MCF 10A (cell line): ENCODE measurements at regions of chr5 and their contacts with region 1.

Region 1: DNA sequence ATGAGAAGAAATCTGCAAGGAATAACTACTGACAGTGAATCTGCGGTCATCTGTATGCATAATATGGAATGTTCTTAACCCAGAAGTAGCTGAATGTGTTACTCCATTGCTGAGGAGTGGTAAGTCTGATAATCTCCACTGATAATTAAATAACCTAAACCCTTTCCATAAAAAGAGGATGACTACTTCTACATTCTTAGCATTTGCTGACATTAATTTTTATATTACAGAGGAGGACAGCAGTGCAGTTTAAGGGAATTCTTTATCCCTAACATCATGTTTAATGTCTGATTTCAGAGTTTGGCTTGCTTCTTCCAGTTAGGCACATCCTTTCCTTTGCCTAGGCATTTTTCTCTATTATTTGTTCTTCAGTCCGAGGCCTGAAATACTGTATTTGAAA is 52.2 kb downstream of the CDC42SE2 start:
- DNase-seq: no peak
- H3K4me3 Mint-ChIP-seq: no peak overlapping the region
- H3K27ac Mint-ChIP-seq: peak overlapping the region; percentile 98
- H3K4me1 Mint-ChIP-seq: peaks cover 39% of the 10 kb centered on the region
- H3K27me3 Mint-ChIP-seq: no peaks in the 10 kb centered on the region
- CTCF ChIP-seq: no peak

Region 2: GRCh38 chr5:131165119-131165727 is 150.8 kb before region 1 on chr5 and contains the start of gene HINT1:
- CTCF ChIA-PET with region 1: interaction called, 3 read pairs
- POLR2A ChIA-PET with region 1: interaction called, 11 read pairs
- intact Hi-C with region 1: no loop called
- DNase-seq: peak; percentile 98
- H3K4me3 Mint-ChIP-seq: peak within 1 kb of the TSS; percentile 76
- H3K27ac Mint-ChIP-seq: peak within 1 kb of the TSS; percentile 65
- H3K4me1 Mint-ChIP-seq: peaks cover 10% of the 10 kb centered on the region
- H3K27me3 Mint-ChIP-seq: no peaks in the 10 kb centered on the region
- CTCF ChIP-seq: peak; percentile 14
- total RNA-seq, gene HINT1: 444 and 575 TPM in 2 replicates

Region 3: GRCh38 chr5:131281133-131281867 is 34.7 kb before region 1 on chr5:
- CTCF ChIA-PET with region 1: interaction called, 5 read pairs
- POLR2A ChIA-PET with region 1: interaction called, 22 read pairs
- intact Hi-C with region 1: no loop called
- DNase-seq: peak; percentile 34
- H3K4me3 Mint-ChIP-seq: peak overlapping the region; percentile 51
- H3K27ac Mint-ChIP-seq: peak overlapping the region; percentile 84
- H3K4me1 Mint-ChIP-seq: peaks cover 33% of the 10 kb centered on the region
- H3K27me3 Mint-ChIP-seq: no peaks in the 10 kb centered on the region
- CTCF ChIP-seq: no peak

Region 4: DNA sequence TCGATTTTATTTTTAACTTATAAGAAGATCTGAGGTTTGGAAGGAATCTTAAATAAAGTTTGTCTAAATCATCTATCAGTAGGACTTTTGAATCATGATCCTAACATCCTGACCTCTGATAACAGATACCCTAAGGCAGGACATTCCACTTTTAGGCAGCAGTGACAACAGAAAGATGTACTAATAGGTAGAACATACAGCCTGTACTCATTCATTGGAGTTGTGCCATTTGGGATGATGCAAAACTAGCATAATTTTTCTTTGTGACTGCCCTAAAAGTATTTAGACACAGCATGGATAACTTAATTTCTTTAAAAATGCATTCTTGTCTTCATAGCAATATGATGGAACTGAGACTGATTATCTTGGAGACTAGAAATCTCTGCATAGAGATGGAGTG is 12.5 kb before region 1 on chr5:
- CTCF ChIA-PET with region 1: interaction called, 3 read pairs
- POLR2A ChIA-PET with region 1: interaction called, 55 read pairs
- intact Hi-C with region 1: no loop called
- DNase-seq: peak; percentile 83
- H3K4me3 Mint-ChIP-seq: peak overlapping the region; percentile 10
- H3K27ac Mint-ChIP-seq: peak overlapping the region; percentile 97
- H3K4me1 Mint-ChIP-seq: peaks cover 67% of the 10 kb centered on the region
- H3K27me3 Mint-ChIP-seq: no peaks in the 10 kb centered on the region
- CTCF ChIP-seq: no peak

Region 5: DNA sequence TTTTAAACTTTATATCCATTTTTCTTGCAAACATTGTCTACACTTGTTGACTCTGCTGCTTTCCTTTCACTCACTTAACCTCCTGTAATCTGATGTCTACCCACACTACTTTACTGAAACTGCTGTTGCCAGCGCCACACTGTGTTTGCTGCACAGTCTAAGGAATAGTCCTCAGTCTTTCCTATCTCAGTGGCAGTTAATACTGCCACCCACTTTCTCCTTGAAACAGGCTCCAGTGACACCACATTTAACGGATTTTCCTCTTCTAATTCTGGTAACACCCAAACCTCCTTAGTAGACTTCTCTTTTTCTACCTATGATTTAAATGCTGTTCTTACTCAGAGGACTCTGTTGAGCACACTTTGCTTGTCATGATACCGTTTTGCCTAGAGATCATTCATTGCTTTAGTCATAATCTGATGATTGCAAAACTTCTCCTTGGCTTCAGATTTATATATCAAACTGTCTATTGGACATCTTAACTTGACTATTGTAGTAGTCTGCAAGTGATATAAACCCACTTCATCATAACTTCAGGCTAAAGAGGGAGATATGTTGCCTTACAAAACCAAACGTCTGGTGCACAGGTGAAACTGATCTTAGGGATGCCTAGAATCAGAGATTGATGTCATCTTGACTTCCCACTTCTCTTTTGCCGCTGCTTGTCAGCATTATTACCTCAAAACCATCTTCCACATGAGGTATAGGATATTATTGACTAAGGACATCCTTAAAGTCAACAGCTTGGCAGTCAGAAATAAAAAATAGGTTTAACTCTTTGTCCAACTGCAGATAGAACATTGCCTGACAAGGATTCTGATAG is 41.9 kb after region 1 on chr5:
- CTCF ChIA-PET with region 1: no interaction called
- POLR2A ChIA-PET with region 1: interaction called, 10 read pairs
- intact Hi-C with region 1: no loop called
- DNase-seq: no peak
- H3K4me3 Mint-ChIP-seq: no peak overlapping the region
- H3K27ac Mint-ChIP-seq: no peak overlapping the region
- H3K4me1 Mint-ChIP-seq: peaks cover 28% of the 10 kb centered on the region
- H3K27me3 Mint-ChIP-seq: no peaks in the 10 kb centered on the region
- CTCF ChIP-seq: no peak